CD8-positive, alpha-beta T cell (primary cell): ENCODE measurements at regions of chr10 and their contacts with region 1.

Region 1: GRCh38 chr10:230737-231136 is 95.5 kb downstream of the ZMYND11 start:
- DNase-seq: peak in 2 of 9 experiments; percentile 4 to 22
- ATAC-seq: no peak
- H3K4me3 ChIP-seq: no peak overlapping the region
- H3K4me3 Mint-ChIP-seq: no peak overlapping the region
- H3K27ac ChIP-seq: no peak overlapping the region
- H3K27ac Mint-ChIP-seq: no peak overlapping the region
- H3K4me1 ChIP-seq: no peaks in the 10 kb centered on the region
- H3K4me1 Mint-ChIP-seq: peaks cover 32% of the 10 kb centered on the region
- H3K27me3 ChIP-seq: no peaks in the 10 kb centered on the region
- H3K27me3 Mint-ChIP-seq: no peaks in the 10 kb centered on the region
- CTCF ChIP-seq: peak; percentile 37

Region 2: GRCh38 chr10:191711-192518 is 38.8 kb before region 1 on chr10:
- CTCF ChIA-PET with region 1: no interaction called
- POLR2A ChIA-PET with region 1: no interaction called
- intact Hi-C with region 1: no loop called
- DNase-seq: no peak
- ATAC-seq: no peak
- H3K4me3 ChIP-seq: no peak overlapping the region
- H3K4me3 Mint-ChIP-seq: no peak overlapping the region
- H3K27ac ChIP-seq: no peak overlapping the region
- H3K27ac Mint-ChIP-seq: no peak overlapping the region
- H3K4me1 ChIP-seq: no peaks in the 10 kb centered on the region
- H3K4me1 Mint-ChIP-seq: peaks cover 19% of the 10 kb centered on the region
- H3K27me3 ChIP-seq: no peaks in the 10 kb centered on the region
- H3K27me3 Mint-ChIP-seq: no peaks in the 10 kb centered on the region
- CTCF ChIP-seq: no peak

Region 3: DNA sequence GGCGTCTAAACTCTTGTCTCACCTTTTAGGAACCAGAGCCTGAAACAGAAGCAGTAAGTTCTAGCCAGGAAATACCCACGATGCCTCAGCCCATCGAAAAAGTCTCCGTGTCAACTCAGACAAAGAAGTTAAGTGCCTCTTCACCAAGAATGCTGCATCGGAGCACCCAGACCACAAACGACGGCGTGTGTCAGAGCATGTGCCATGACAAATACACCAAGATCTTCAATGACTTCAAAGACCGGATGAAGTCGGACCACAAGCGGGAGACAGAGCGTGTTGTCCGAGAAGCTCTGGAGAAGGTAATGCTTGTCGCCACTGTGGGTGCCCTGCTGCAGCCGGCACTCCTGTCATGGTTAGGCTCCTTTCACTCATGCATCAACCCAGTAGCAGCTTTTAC is 17.6 kb after region 1 on chr10:
- CTCF ChIA-PET with region 1: interaction called, 10 read pairs
- POLR2A ChIA-PET with region 1: no interaction called
- intact Hi-C with region 1: no loop called
- DNase-seq: peak in 3 of 9 experiments; percentile 31 to 56 (median 40)
- ATAC-seq: peak; percentile 40
- H3K4me3 ChIP-seq: no peak overlapping the region
- H3K4me3 Mint-ChIP-seq: no peak overlapping the region
- H3K27ac ChIP-seq: no peak overlapping the region
- H3K27ac Mint-ChIP-seq: no peak overlapping the region
- H3K4me1 ChIP-seq: no peaks in the 10 kb centered on the region
- H3K4me1 Mint-ChIP-seq: peaks cover 4% of the 10 kb centered on the region
- H3K27me3 ChIP-seq: no peaks in the 10 kb centered on the region
- H3K27me3 Mint-ChIP-seq: no peaks in the 10 kb centered on the region
- CTCF ChIP-seq: no peak